IMR-90 (cell line): ENCODE measurements at regions of chr1 and their contacts with region 1.

Region 1: GRCh38 chr1:230401763-230402294 is 24.3 kb downstream of the PGBD5 start:
- DNase-seq: peak; percentile 26
- ATAC-seq: peak; percentile 54
- H3K4me3 ChIP-seq: no peak overlapping the region
- H3K27ac ChIP-seq: peak overlapping the region; percentile 68; the same call in 1 of the 2 replicates
- H3K4me1 ChIP-seq: 0 out of 2 replicates have a peak, but pooled peaks cover 1% of the 10 kb centered on the region
- H3K27me3 ChIP-seq: no peaks in the 10 kb centered on the region
- CTCF ChIP-seq: no peak
- POLR2A ChIP-seq: no peak
- RAD21 ChIP-seq: no peak

Region 2: DNA sequence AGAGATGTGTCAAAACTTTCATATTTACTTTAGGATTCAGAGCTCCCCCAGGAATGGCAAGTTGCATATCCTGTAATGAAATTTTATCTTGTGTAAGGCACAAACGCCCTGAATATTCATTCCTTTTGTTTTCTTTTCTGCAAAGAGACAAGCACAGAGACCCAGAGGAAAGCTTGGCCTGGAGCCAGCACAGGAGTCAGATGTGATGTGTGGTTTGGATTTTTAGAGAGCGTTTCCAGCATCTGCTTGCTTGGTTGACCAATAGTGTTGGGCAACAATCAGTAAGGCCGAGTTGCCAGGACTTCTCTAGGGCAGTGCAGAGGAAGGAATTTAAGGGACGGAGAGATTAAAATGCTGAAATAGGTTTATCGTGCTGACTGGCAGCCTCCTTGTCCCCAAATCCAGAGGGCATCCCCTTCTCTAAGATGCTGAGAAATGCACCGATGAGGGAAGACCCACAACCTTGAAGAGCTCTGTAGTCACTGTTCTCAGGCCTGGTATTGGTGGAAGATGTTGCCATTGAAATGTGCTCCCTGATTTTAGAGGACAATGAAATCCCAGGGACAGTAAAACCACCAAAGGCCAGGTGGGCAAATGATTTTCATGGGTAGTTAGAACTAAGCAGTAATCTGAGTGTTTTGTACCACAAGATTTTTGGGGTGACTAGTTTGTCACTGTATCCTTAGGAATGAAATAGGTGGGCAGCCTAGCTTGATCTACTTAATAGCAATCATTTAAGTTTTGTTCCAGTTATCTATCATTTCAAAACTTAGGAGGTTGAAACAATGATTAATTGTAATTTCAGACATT is 1704.4 kb before region 1 on chr1:
- CTCF ChIA-PET with region 1: no interaction called
- POLR2A ChIA-PET with region 1: no interaction called
- dilution Hi-C with region 1: no loop called
- in situ Hi-C with region 1: no loop called
- intact Hi-C with region 1: no loop called
- DNase-seq: peak; percentile 31
- ATAC-seq: no peak
- H3K4me3 ChIP-seq: no peak overlapping the region
- H3K27ac ChIP-seq: no peak overlapping the region
- H3K4me1 ChIP-seq: no peaks in the 10 kb centered on the region
- H3K27me3 ChIP-seq: peaks cover 1% of the 10 kb centered on the region; the same call in 1 of the 2 replicates
- CTCF ChIP-seq: no peak
- POLR2A ChIP-seq: no peak
- RAD21 ChIP-seq: no peak

Region 3: DNA sequence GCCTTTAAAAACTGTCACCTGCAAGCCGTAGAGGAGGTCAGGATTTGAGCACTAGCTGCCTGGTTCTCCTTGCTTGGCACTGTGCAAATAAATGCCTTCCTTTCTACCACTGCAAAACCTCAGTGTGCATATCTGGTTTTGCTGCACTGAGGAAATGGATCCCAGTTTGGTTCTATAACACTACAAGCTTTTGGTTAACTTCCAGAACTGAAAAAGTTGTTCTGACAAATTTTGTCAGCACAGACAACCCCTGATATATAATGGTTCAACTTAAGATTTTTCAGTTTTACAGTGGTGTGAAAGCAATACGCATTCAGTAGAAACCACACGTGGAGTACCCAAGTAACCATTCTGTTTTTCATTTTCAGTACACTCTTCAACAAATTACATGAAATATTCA is 364.6 kb before region 1 on chr1:
- CTCF ChIA-PET with region 1: no interaction called
- POLR2A ChIA-PET with region 1: no interaction called
- dilution Hi-C with region 1: no loop called
- in situ Hi-C with region 1: no loop called
- intact Hi-C with region 1: no loop called
- DNase-seq: no peak
- ATAC-seq: no peak
- H3K4me3 ChIP-seq: no peak overlapping the region
- H3K27ac ChIP-seq: no peak overlapping the region
- H3K4me1 ChIP-seq: no peaks in the 10 kb centered on the region
- H3K27me3 ChIP-seq: no peaks in the 10 kb centered on the region; the same call in 1 of the 2 replicates
- CTCF ChIP-seq: no peak
- POLR2A ChIP-seq: no peak
- RAD21 ChIP-seq: no peak

Region 4: DNA sequence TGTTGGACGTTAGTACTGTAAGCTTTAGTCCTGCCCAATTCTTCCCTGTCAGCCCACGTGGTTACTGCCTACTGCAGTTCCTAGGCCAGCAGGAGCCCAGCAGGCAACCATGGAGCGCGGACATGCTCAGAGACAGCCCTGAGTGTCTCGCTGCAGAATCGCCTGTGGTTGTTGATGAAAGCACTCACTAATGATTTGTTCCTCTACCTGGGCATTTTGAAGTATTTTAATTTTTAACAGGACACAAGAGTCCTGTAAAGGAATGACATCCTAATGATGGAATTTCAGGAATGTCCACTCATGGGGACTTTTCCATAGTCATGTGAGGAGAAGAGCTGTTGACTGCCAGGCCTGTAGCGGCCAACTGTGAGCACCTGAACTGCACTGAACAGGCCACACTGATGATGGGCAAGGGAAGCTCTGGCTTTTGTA is 19.8 kb before region 1 on chr1:
- CTCF ChIA-PET with region 1: interaction called, 12 read pairs
- POLR2A ChIA-PET with region 1: no interaction called
- dilution Hi-C with region 1: no loop called
- in situ Hi-C with region 1: no loop called
- intact Hi-C with region 1: no loop called
- DNase-seq: no peak
- ATAC-seq: no peak
- H3K4me3 ChIP-seq: no peak overlapping the region
- H3K27ac ChIP-seq: no peak overlapping the region
- H3K4me1 ChIP-seq: no peaks in the 10 kb centered on the region
- H3K27me3 ChIP-seq: no peaks in the 10 kb centered on the region
- CTCF ChIP-seq: no peak
- POLR2A ChIP-seq: no peak
- RAD21 ChIP-seq: no peak